ENCODE measurements at regions of chr22 and their contacts with region 1.

Region 1: DNA sequence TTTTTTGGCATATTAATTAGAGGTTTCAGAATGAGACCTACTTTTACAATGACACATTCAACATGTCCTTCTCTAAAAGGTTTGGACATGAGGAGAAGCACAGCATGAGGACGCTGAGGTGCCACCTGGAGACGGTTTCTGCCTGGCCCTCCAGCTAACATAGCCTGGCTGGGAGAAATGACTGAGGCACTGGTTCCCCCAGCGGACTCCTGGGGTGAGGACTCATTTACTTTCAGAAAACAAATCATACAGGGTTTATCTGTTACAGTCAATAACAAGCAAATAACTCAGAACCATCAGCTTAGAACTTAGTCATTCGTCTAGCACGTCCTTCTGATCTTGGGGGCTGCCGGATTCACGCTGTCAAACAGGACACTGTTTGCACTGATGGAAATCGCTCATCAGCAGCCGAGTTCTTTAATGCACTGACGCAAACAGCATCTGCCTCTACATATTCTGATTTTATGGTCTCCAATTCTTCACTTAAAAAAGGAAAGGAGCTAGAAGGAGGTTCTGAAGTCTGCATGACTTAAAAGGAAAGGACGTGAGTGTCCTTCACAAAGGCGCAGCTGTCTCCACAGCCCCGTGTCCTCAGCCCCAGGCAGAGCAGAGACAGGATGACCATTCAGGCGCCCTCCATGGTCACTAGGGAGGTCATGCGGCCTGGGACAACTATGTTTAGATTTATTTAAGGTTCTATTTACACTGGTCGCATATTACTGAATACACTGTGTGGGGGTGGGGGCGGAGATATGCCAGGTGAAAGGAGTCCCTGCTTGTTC is 44.2 kb downstream of the CERK start:
- DNase-seq: no peak
- ATAC-seq: no peak
- H3K4me3 ChIP-seq: no peak overlapping the region
- H3K27ac ChIP-seq: no peak overlapping the region
- H3K4me1 ChIP-seq: peaks cover 0 to 11% (median 4%) of the 10 kb centered on the region in 12 donors
- H3K27me3 ChIP-seq: no peaks in the 10 kb centered on the region
- CTCF ChIP-seq: no peak
- POLR2A ChIP-seq: no peak

Region 2: DNA sequence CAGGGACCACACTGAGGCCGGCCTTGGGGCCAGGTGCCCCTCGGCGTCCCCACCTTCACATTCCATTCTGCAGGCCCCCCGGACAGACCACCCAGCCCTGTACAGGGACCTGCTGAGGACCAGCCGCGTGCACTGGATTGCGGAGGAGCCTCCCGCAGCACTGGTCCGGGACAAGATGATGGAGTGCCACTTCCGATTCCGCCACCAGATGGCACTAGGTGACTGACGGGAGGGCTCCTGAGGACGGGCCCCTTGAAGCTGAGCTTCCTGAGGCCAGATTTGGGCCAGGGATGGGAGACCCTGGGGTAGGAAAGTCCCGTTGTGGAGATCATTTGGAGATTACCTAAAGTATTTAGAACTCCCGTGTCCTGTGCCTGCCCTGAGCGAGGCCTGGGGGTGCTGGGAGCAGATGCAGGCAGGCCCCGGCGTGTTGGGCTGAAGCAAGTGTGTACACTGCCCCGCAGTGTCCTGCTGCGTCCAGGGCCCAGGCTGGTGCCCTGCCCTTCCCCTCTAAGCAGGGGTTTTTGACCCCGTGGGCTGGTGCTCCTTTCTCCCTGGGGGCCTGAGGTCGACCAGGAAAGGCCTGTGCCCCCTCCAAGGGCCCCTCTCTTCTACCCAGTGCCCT is 338.3 kb before region 1 on chr22:
- intact Hi-C with region 1: loop called in 1 of 10 experiments (anchors 10 kb)
- DNase-seq: peak; percentile 62 to 74 (median 71)
- ATAC-seq: peak; percentile 11 to 49 (median 18)
- H3K4me3 ChIP-seq: no peak overlapping the region
- H3K27ac ChIP-seq: peak overlapping the region in 4 of 12 donors; percentile 20 to 94 (median 57)
- H3K4me1 ChIP-seq: peaks cover 0 to 47% (median 17%) of the 10 kb centered on the region in 12 donors
- H3K27me3 ChIP-seq: no peaks in the 10 kb centered on the region
- CTCF ChIP-seq: peak; percentile 58 to 83 (median 73)
- POLR2A ChIP-seq: no peak

Region 3: DNA sequence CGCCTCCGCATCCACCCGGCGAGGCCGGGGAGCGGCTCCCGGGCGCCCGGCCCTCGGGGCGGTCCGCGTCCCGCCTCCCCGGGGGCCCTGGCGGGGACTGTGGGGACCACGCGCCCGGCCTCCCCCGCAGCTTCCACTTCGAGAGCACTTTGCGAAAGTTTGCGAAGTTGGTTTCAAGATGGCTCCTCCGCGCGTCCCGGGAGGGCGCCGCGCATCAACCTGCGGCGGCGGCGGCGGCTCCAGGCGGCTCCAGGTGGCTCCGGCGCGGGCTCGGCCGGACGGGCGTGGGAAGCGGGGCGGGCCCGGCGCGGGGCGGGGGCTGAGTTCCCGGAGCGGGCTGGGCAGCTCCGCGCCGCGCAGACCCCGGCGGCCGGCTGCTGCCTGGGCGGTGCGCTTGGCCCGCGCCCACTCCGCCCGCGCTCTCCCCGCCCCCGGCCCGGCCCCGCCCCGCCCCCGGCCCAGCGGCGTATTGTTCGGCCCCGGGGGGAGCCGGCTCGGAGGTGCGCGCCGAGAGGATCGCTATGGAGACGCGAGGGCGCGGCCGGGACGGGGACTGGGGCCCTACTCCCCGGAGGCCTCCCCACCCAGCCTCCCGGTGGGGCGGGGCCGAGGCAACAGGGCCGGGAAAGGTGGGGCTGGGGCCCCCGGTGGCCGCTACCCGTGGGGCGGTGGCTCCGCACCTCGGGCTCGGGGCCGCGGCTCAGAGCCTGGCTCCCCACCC is 156.4 kb before region 1 on chr22 and contains the start of gene CELSR1:
- intact Hi-C with region 1: no loop called
- DNase-seq: no peak
- ATAC-seq: peak in 3 of 4 donors; percentile 15 to 55 (median 42)
- H3K4me3 ChIP-seq: peak within 1 kb of the TSS; percentile 23 to 65 (median 56)
- H3K27ac ChIP-seq: peak within 1 kb of the TSS in 6 of 12 donors; percentile 12 to 68 (median 46)
- H3K4me1 ChIP-seq: peaks cover 3 to 28% (median 16%) of the 10 kb centered on the region in 12 donors
- H3K27me3 ChIP-seq: peaks cover 0 to 47% (median 11%) of the 10 kb centered on the region in 9 donors
- CTCF ChIP-seq: no peak
- POLR2A ChIP-seq: no peak
- total RNA-seq, gene CELSR1: 8.1 to 15.8 (median 12.6) TPM

Region 4: DNA sequence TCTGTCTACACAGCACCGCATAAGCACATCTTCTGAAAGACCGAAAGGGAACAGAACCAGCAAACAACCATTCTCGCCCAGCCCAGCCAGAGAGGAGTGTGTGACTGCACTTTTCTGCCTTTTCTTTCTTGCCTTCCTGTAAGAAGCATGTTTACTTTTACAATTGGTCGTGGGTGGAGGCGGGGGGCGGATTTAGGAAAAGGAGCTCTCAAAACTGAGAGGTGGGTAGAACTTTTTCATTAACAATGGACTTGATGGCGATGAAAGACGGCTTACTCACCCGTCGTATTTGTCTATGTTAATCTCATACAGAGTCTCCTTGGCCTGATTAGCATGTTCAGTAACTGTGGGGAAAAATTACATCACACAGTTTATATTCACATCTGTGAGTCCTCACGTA is 17.0 kb after region 1 on chr22:
- intact Hi-C with region 1: loop called in 1 of 10 experiments (anchors 2 kb)
- DNase-seq: no peak
- ATAC-seq: no peak
- H3K4me3 ChIP-seq: no peak overlapping the region
- H3K27ac ChIP-seq: no peak overlapping the region
- H3K4me1 ChIP-seq: peaks cover 0 to 24% (median 7%) of the 10 kb centered on the region in 12 donors
- H3K27me3 ChIP-seq: no peaks in the 10 kb centered on the region
- CTCF ChIP-seq: no peak
- POLR2A ChIP-seq: no peak

Region 5: DNA sequence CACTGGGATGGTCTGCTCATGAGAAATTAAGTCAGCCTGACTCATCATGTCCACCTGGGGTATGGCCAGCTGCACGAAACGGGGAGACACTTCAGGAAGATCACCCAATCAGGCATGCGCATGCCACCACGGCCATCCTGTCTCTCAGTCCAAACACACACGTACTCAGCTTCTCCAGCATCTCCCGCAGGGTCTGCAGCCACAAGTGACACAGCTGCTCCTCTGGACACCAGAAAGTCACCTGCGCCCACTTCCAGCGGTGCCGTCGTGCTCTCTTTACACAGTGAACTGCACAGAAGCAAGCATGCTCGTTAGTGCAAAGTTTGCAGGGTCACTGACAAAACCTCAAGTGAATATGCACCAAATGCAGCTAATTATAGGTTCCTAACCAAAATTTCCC is 26.1 kb after region 1 on chr22:
- intact Hi-C with region 1: loop called in 5 of 10 experiments (anchors 2 to 5 kb)
- DNase-seq: no peak
- ATAC-seq: no peak
- H3K4me3 ChIP-seq: no peak overlapping the region
- H3K27ac ChIP-seq: no peak overlapping the region
- H3K4me1 ChIP-seq: peaks cover 0 to 13% (median 6%) of the 10 kb centered on the region in 12 donors
- H3K27me3 ChIP-seq: no peaks in the 10 kb centered on the region
- CTCF ChIP-seq: no peak
- POLR2A ChIP-seq: no peak

Region 6: GRCh38 chr22:46726066-46726985 is 32.5 kb after region 1 on chr22:
- intact Hi-C with region 1: loop called in 5 of 10 experiments (anchors 5 kb)
- DNase-seq: peak in 2 of 5 donors; percentile 55 to 61
- ATAC-seq: peak; percentile 12 to 38 (median 29)
- H3K4me3 ChIP-seq: no peak overlapping the region
- H3K27ac ChIP-seq: peak overlapping the region in 7 of 12 donors; percentile 11 to 68 (median 24)
- H3K4me1 ChIP-seq: peaks cover 24 to 71% (median 60%) of the 10 kb centered on the region in 12 donors
- H3K27me3 ChIP-seq: no peaks in the 10 kb centered on the region
- CTCF ChIP-seq: no peak
- POLR2A ChIP-seq: no peak

Measured in heart left ventricle (tissue), 16 donors.